HEK293T (cell line): ENCODE measurements at regions of chr22 and their contacts with region 1.

Region 1: GRCh38 chr22:31080848-31081649 is at the start of gene SMTN:
- DNase-seq: peak; percentile 99

Region 2: GRCh38 chr22:31055635-31056159 is 25.4 kb before region 1 on chr22:
- CTCF ChIA-PET with region 1: interaction called, 3 read pairs
- POLR2A ChIA-PET with region 1: interaction called, 10 read pairs
- DNase-seq: peak; percentile 73

Region 3: GRCh38 chr22:31107178-31107893 is 26.3 kb after region 1 on chr22 and contains the start of gene SELENOM:
- CTCF ChIA-PET with region 1: interaction called, 18 read pairs
- POLR2A ChIA-PET with region 1: interaction called, 6 read pairs
- DNase-seq: peak; percentile 99

Region 4: DNA sequence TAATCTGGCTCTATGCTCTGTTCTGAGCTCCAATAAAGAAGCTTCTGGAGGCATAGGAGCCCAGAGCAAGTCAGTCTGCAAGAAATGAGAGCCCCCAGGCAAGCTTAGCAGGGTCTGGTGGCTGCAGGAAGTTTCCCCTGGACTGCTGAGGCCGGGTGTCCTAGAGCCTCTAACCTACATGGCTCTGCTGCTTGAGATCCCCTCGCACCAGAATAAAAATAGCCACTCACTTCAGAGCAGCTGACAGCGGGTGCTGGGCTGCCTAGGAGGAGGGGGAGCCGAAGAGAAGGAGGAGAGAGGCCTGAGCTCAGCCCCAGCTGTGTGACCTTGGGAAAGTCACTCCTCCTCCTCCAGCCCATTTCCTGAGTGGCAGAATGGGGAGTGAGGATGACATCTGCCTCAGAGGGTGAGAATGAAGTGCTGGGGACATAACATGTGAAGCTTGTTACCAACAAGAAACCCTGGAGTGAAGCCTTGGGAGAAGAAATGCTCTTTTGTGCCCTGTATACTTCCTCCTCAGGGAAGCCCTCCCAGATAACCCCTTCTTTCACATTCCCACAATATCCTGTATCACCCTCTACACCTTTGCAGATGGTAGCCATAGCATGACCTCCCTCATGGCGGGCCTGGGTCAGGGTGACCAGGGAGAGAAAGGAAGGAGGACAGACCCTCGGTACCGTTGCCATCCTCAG is 38.1 kb after region 1 on chr22:
- CTCF ChIA-PET with region 1: no interaction called
- POLR2A ChIA-PET with region 1: no interaction called
- DNase-seq: no peak